GM12878 (cell line): ENCODE measurements at regions of chr1 and their contacts with region 1.

Region 1: DNA sequence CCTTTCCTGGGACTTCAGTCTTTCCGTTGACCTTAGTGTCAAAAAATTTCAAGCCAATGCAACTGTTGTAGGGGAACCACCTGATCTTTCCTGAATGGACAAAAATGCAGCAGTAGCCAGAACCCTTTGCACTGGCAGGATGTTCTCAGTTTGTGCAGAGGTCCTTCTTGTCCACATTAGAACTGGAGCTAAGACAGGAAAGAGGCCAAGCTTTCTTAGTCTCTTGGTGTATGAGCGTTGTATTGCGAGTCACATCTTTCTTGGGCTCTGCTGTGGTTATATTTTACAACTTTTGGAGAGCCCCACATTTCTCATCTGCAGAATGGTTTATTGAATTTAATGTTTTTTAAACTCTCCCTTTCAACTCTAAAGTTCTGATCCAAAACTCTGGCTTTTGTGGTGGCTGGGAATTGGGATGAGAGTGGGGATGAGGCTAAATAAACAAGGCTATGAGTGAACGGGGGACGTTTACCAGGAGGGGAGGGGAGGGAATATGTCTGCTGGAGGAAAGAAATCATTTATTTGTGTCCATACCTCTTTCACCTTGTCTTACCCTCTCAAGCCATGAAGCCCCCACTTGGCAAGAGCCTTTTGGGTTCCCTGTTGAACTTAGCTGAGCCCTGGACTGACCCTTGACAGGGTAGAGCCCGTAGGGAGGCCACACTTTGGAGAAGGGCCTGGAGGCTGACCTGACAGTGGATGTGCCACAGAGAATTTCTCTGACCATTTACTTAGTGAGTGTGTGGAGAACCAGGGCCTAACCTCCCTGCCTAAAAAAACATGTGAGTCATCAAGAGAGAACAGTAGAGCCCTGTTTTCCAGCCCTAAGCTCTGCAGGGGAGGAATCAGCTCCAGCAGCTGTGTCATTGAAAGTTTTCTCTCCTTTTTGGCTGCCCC is 586 bp downstream of the CHI3L2 start:
- DNase-seq: no peak
- ATAC-seq: no peak; the same call in 2 of the 3 replicates
- H3K4me3 ChIP-seq: no peak overlapping the region
- H3K27ac ChIP-seq: 0 out of 2 replicates have a peak overlapping the region, but pooled peaks have one; percentile 3
- H3K4me1 ChIP-seq: peaks cover 54% of the 10 kb centered on the region
- H3K27me3 ChIP-seq: no peaks in the 10 kb centered on the region
- CTCF ChIP-seq: no peak
- EP300 ChIP-seq: no peak
- POLR2A ChIP-seq: no peak
- RAD21 ChIP-seq: no peak

Region 2: GRCh38 chr1:111197598-111198284 is 30.4 kb before region 1 on chr1:
- CTCF ChIA-PET with region 1: interaction called, 20 read pairs
- POLR2A ChIA-PET with region 1: interaction called, 4 read pairs
- RAD21 ChIA-PET with region 1: interaction called, 36 read pairs
- SMC1A ChIA-PET with region 1: interaction called, 40 read pairs
- in situ Hi-C with region 1: no loop called
- intact Hi-C with region 1: no loop called
- DNase-seq: no peak
- ATAC-seq: peak; percentile 28
- H3K4me3 ChIP-seq: peak overlapping the region; percentile 73
- H3K27ac ChIP-seq: peak overlapping the region; percentile 92
- H3K4me1 ChIP-seq: peaks cover 40% of the 10 kb centered on the region
- H3K27me3 ChIP-seq: no peaks in the 10 kb centered on the region
- CTCF ChIP-seq: peak; percentile 54 to 65 (median 55)
- EP300 ChIP-seq: no peak
- POLR2A ChIP-seq: no peak
- RAD21 ChIP-seq: peak; percentile 58

Region 3: GRCh38 chr1:111214074-111214801 is 13.9 kb before region 1 on chr1:
- CTCF ChIA-PET with region 1: interaction called, 6 read pairs
- POLR2A ChIA-PET with region 1: interaction called, 6 read pairs
- RAD21 ChIA-PET with region 1: interaction called, 17 read pairs
- SMC1A ChIA-PET with region 1: interaction called, 15 read pairs
- in situ Hi-C with region 1: no loop called
- intact Hi-C with region 1: no loop called
- DNase-seq: peak; percentile 81
- ATAC-seq: peak; percentile 23
- H3K4me3 ChIP-seq: no peak overlapping the region
- H3K27ac ChIP-seq: peak overlapping the region; percentile 100
- H3K4me1 ChIP-seq: peaks cover 62% of the 10 kb centered on the region
- H3K27me3 ChIP-seq: no peaks in the 10 kb centered on the region
- CTCF ChIP-seq: no peak
- EP300 ChIP-seq: no peak
- POLR2A ChIP-seq: no peak
- RAD21 ChIP-seq: 0 out of 2 replicates have a peak, but pooled peaks have one; percentile 1

Region 4: DNA sequence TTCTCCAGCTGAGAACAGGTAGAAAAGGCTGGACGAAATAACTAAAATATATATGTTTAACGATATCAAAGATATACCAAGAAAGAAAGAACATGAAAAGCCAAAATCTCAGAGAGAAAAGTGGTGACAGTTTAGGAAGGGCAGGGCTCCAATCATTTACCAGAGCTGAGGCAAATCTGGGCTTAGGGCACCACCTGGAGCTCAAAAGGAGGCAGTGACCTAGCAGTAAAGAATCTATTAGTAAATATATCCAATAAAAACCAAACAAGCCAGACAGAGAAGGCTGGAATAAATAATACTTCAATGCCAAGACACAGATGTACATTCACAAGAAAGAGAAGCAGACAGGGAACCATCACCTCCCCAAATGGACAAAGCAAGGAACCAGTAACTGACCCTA is 106.1 kb after region 1 on chr1:
- CTCF ChIA-PET with region 1: interaction called, 84 read pairs
- POLR2A ChIA-PET with region 1: interaction called, 4 read pairs
- RAD21 ChIA-PET with region 1: interaction called, 24 read pairs
- SMC1A ChIA-PET with region 1: interaction called, 49 read pairs
- in situ Hi-C with region 1: loop called (anchors 5 kb)
- intact Hi-C with region 1: loop called (anchors 1 kb)
- DNase-seq: peak; percentile 33
- ATAC-seq: peak; percentile 85
- H3K4me3 ChIP-seq: no peak overlapping the region
- H3K27ac ChIP-seq: no peak overlapping the region
- H3K4me1 ChIP-seq: peaks cover 17% of the 10 kb centered on the region
- H3K27me3 ChIP-seq: no peaks in the 10 kb centered on the region
- CTCF ChIP-seq: peak; percentile 61 to 75 (median 73); a peak in 5 of 6 replicates
- EP300 ChIP-seq: no peak
- POLR2A ChIP-seq: no peak
- RAD21 ChIP-seq: peak; percentile 95

Region 5: GRCh38 chr1:111392460-111392945 is 164.4 kb after region 1 on chr1:
- CTCF ChIA-PET with region 1: interaction called, 117 read pairs
- POLR2A ChIA-PET with region 1: no interaction called
- RAD21 ChIA-PET with region 1: no interaction called
- SMC1A ChIA-PET with region 1: interaction called, 3 read pairs
- in situ Hi-C with region 1: loop called (anchors 5 kb)
- intact Hi-C with region 1: no loop called
- DNase-seq: no peak
- ATAC-seq: no peak
- H3K4me3 ChIP-seq: no peak overlapping the region
- H3K27ac ChIP-seq: no peak overlapping the region
- H3K4me1 ChIP-seq: no peaks in the 10 kb centered on the region
- H3K27me3 ChIP-seq: no peaks in the 10 kb centered on the region; a peak in 1 of 4 replicates
- CTCF ChIP-seq: no peak
- EP300 ChIP-seq: no peak
- POLR2A ChIP-seq: no peak
- RAD21 ChIP-seq: no peak

Region 6: GRCh38 chr1:111399792-111400610 is 171.9 kb after region 1 on chr1:
- CTCF ChIA-PET with region 1: interaction called, 117 read pairs
- POLR2A ChIA-PET with region 1: interaction called, 8 read pairs
- RAD21 ChIA-PET with region 1: interaction called, 37 read pairs
- SMC1A ChIA-PET with region 1: interaction called, 37 read pairs
- in situ Hi-C with region 1: no loop called
- intact Hi-C with region 1: loop called (anchors 1 kb)
- DNase-seq: peak; percentile 15
- ATAC-seq: peak; percentile 44; the same call in 2 of the 3 replicates
- H3K4me3 ChIP-seq: no peak overlapping the region
- H3K27ac ChIP-seq: no peak overlapping the region
- H3K4me1 ChIP-seq: no peaks in the 10 kb centered on the region
- H3K27me3 ChIP-seq: no peaks in the 10 kb centered on the region
- CTCF ChIP-seq: peak; percentile 60 to 64 (median 60)
- EP300 ChIP-seq: no peak
- POLR2A ChIP-seq: no peak
- RAD21 ChIP-seq: peak; percentile 86

Region 7: DNA sequence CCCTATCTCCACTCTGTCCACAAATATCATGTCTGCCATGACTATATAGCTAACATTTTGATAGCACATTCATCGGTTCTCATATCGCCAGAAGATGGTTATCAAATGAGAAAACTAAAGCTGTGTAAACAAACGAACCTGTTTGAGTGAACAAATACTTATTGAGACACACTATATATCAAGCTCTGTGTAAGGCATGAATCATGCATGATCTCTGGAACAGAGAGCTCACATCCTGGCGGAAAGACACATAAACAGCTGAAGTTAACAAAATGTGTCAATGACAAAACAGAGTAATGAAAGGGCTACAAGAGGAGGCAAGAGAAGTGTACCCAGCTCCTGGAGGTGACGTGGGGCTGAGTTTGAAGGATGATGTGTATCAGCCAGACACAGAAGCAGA is 748.3 kb after region 1 on chr1:
- CTCF ChIA-PET with region 1: no interaction called
- POLR2A ChIA-PET with region 1: no interaction called
- RAD21 ChIA-PET with region 1: no interaction called
- SMC1A ChIA-PET with region 1: no interaction called
- in situ Hi-C with region 1: no loop called
- intact Hi-C with region 1: no loop called
- DNase-seq: no peak
- ATAC-seq: no peak
- H3K4me3 ChIP-seq: no peak overlapping the region
- H3K27ac ChIP-seq: no peak overlapping the region
- H3K4me1 ChIP-seq: no peaks in the 10 kb centered on the region
- H3K27me3 ChIP-seq: peaks cover 5 to 8% of the 10 kb centered on the region in 2 experiments
- CTCF ChIP-seq: no peak
- EP300 ChIP-seq: no peak
- POLR2A ChIP-seq: no peak
- RAD21 ChIP-seq: no peak